CD8-positive, alpha-beta T cell (primary cell): ENCODE measurements at regions of chr1 and their contacts with region 1.

Region 1: GRCh38 chr1:220594356-220594755 is 66.4 kb downstream of the MARK1 start:
- DNase-seq: no peak
- ATAC-seq: no peak
- H3K4me3 ChIP-seq: no peak overlapping the region
- H3K4me3 Mint-ChIP-seq: no peak overlapping the region
- H3K27ac ChIP-seq: no peak overlapping the region
- H3K27ac Mint-ChIP-seq: no peak overlapping the region
- H3K4me1 ChIP-seq: no peaks in the 10 kb centered on the region
- H3K4me1 Mint-ChIP-seq: no peaks in the 10 kb centered on the region
- H3K27me3 ChIP-seq: no peaks in the 10 kb centered on the region
- H3K27me3 Mint-ChIP-seq: peaks cover 10% of the 10 kb centered on the region
- CTCF ChIP-seq: no peak

Region 2: DNA sequence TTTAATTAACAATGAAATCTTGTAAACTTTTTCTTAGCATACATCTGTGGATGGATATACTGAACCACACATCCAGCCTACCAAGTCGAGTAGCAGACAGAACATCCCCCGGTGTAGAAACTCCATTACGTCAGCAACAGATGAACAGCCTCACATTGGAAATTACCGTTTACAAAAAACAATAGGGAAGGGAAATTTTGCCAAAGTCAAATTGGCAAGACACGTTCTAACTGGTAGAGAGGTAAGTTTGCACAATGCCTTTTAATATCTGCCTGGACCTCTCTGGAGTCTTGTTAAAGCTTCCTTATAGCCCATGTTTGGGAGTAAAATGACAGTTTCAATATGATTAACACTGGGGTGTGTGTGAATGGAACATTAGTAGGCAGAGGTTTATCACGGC is 15.0 kb before region 1 on chr1:
- CTCF ChIA-PET with region 1: no interaction called
- POLR2A ChIA-PET with region 1: no interaction called
- intact Hi-C with region 1: loop called in 1 of 2 experiments (anchors 1 kb)
- DNase-seq: no peak
- ATAC-seq: no peak
- H3K4me3 ChIP-seq: no peak overlapping the region
- H3K4me3 Mint-ChIP-seq: no peak overlapping the region
- H3K27ac ChIP-seq: no peak overlapping the region
- H3K27ac Mint-ChIP-seq: no peak overlapping the region
- H3K4me1 ChIP-seq: no peaks in the 10 kb centered on the region
- H3K4me1 Mint-ChIP-seq: no peaks in the 10 kb centered on the region
- H3K27me3 ChIP-seq: no peaks in the 10 kb centered on the region
- H3K27me3 Mint-ChIP-seq: peaks cover 8% of the 10 kb centered on the region
- CTCF ChIP-seq: no peak

Region 3: GRCh38 chr1:220616836-220617235 is 22.5 kb after region 1 on chr1:
- CTCF ChIA-PET with region 1: no interaction called
- POLR2A ChIA-PET with region 1: no interaction called
- intact Hi-C with region 1: no loop called
- DNase-seq: no peak
- ATAC-seq: no peak
- H3K4me3 ChIP-seq: no peak overlapping the region
- H3K4me3 Mint-ChIP-seq: no peak overlapping the region
- H3K27ac ChIP-seq: no peak overlapping the region
- H3K27ac Mint-ChIP-seq: no peak overlapping the region
- H3K4me1 ChIP-seq: no peaks in the 10 kb centered on the region
- H3K4me1 Mint-ChIP-seq: no peaks in the 10 kb centered on the region
- H3K27me3 ChIP-seq: no peaks in the 10 kb centered on the region
- H3K27me3 Mint-ChIP-seq: no peaks in the 10 kb centered on the region
- CTCF ChIP-seq: no peak